ENCODE measurements at regions of chr9 and their contacts with region 1.

Region 1: GRCh38 chr9:95726756-95727155 is 148.7 kb upstream of the ERCC6L2 start:
- DNase-seq: no peak
- ATAC-seq: no peak
- H3K4me3 Mint-ChIP-seq: no peak overlapping the region
- H3K27ac Mint-ChIP-seq: no peak overlapping the region
- H3K4me1 Mint-ChIP-seq: peaks cover 37% of the 10 kb centered on the region
- H3K27me3 Mint-ChIP-seq: peaks cover 7% of the 10 kb centered on the region

Region 2: GRCh38 chr9:95462249-95463147 is 264.3 kb before region 1 on chr9:
- CTCF ChIA-PET with region 1: no interaction called
- POLR2A ChIA-PET with region 1: no interaction called
- intact Hi-C with region 1: loop called in 1 of 2 experiments (anchors 1 kb)
- DNase-seq: peak; percentile 89
- ATAC-seq: peak; percentile 94
- H3K4me3 Mint-ChIP-seq: peak overlapping the region; percentile 72
- H3K27ac Mint-ChIP-seq: peak overlapping the region; percentile 72
- H3K4me1 Mint-ChIP-seq: peaks cover 26% of the 10 kb centered on the region
- H3K27me3 Mint-ChIP-seq: peaks cover 4% of the 10 kb centered on the region

Region 3: GRCh38 chr9:95570150-95570549 is 156.6 kb before region 1 on chr9:
- CTCF ChIA-PET with region 1: no interaction called
- POLR2A ChIA-PET with region 1: no interaction called
- intact Hi-C with region 1: no loop called
- DNase-seq: no peak
- ATAC-seq: no peak
- H3K4me3 Mint-ChIP-seq: peak overlapping the region; percentile 20
- H3K27ac Mint-ChIP-seq: no peak overlapping the region
- H3K4me1 Mint-ChIP-seq: peaks cover 12% of the 10 kb centered on the region
- H3K27me3 Mint-ChIP-seq: peaks cover 30% of the 10 kb centered on the region

Region 4: DNA sequence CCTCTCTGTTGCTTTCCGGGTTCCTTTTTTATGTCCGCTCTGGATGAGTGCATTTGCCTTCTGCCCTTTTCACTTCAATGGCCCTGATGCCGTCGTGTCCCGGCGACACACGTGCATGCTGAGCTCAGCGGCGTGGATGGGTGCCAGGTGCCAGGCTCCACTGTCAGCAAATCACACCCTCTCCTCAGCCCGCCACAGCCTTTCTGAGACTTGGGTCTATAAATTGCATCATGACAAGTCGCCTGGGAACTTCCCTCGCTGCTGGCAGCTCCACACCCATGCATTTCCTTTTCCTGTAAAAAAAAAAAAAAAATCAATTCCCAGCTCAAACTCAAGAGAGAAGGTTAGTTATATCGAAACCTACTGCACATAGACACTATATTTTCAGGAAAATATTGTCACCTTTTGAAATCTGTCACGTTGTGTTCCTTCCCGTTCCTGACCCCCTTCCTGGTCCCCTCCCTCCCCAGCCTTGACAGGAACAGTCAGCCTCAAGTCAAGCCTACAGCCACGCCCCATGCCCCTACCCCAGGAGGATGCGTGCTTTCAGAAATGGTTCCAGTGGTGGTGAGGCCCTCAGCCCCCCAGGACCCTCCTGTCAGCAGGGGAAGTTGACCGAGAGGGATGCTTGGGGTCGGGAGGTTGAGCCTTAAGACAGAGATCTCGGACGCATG is 99.7 kb before region 1 on chr9:
- CTCF ChIA-PET with region 1: no interaction called
- POLR2A ChIA-PET with region 1: no interaction called
- intact Hi-C with region 1: loop called in 1 of 2 experiments (anchors 1 kb)
- DNase-seq: peak; percentile 86
- ATAC-seq: peak; percentile 98
- H3K4me3 Mint-ChIP-seq: no peak overlapping the region
- H3K27ac Mint-ChIP-seq: peak overlapping the region; percentile 91
- H3K4me1 Mint-ChIP-seq: peaks cover 19% of the 10 kb centered on the region
- H3K27me3 Mint-ChIP-seq: peaks cover 6% of the 10 kb centered on the region

Region 5: DNA sequence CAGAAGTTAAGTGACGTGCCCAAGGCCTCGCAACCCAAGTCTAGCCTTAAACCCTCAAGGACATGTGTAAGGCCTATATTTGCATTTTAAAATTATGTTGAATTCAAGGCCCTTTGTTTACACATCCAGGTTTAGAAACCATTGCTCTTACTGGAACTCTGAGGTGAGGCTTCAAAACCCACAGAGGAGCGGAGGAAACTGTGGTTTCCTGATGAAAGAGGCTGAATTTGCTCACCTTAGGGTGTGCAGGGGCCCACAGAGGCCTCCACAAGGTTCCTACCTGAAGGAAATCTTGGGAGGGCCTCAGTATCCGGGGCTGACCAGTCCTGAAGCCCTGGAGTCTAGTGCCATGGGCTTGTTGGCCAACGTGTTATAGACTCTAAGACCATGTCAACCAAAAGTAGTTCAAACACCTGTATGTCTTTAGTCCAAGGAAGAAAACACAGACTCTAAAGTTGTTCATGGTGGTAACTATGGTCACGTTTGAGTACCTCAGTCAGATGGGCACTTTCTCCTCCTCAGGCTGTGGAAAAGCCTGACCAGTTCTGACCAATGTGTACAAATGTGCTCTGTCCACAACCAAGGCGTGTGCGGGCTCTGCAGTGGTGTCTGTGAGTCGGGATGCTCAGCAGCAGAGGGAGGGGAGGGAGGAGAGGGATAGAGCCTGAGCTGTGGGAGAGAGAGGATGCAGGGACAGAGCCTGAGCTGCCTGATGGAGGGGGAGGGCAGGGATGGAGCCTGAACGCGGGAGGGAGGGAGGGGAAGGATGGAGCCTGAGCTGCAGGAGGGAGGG is 24.2 kb after region 1 on chr9:
- CTCF ChIA-PET with region 1: interaction called, 5 read pairs
- POLR2A ChIA-PET with region 1: no interaction called
- intact Hi-C with region 1: loop called in 1 of 2 experiments (anchors 1 kb)
- DNase-seq: peak; percentile 53
- ATAC-seq: peak; percentile 76
- H3K4me3 Mint-ChIP-seq: no peak overlapping the region
- H3K27ac Mint-ChIP-seq: peak overlapping the region; percentile 30
- H3K4me1 Mint-ChIP-seq: peaks cover 10% of the 10 kb centered on the region
- H3K27me3 Mint-ChIP-seq: peaks cover 12% of the 10 kb centered on the region

Region 6: GRCh38 chr9:95852059-95853032 is 125.6 kb after region 1 on chr9:
- CTCF ChIA-PET with region 1: no interaction called
- POLR2A ChIA-PET with region 1: no interaction called
- intact Hi-C with region 1: loop called in 1 of 2 experiments (anchors 2 kb)
- DNase-seq: peak; percentile 22
- ATAC-seq: peak; percentile 96
- H3K4me3 Mint-ChIP-seq: no peak overlapping the region
- H3K27ac Mint-ChIP-seq: peak overlapping the region; percentile 58
- H3K4me1 Mint-ChIP-seq: peaks cover 19% of the 10 kb centered on the region
- H3K27me3 Mint-ChIP-seq: no peaks in the 10 kb centered on the region

Region 7: GRCh38 chr9:95947118-95947517 is 220.4 kb after region 1 on chr9:
- CTCF ChIA-PET with region 1: no interaction called
- POLR2A ChIA-PET with region 1: no interaction called
- intact Hi-C with region 1: no loop called
- DNase-seq: no peak
- ATAC-seq: no peak
- H3K4me3 Mint-ChIP-seq: no peak overlapping the region
- H3K27ac Mint-ChIP-seq: no peak overlapping the region
- H3K4me1 Mint-ChIP-seq: no peaks in the 10 kb centered on the region
- H3K27me3 Mint-ChIP-seq: no peaks in the 10 kb centered on the region

Region 8: GRCh38 chr9:96020792-96021550 is 294.2 kb after region 1 on chr9:
- CTCF ChIA-PET with region 1: no interaction called
- POLR2A ChIA-PET with region 1: no interaction called
- intact Hi-C with region 1: loop called (anchors 1 to 2 kb)
- DNase-seq: peak; percentile 71
- ATAC-seq: peak; percentile 38
- H3K4me3 Mint-ChIP-seq: peak overlapping the region; percentile 68
- H3K27ac Mint-ChIP-seq: peak overlapping the region; percentile 63
- H3K4me1 Mint-ChIP-seq: peaks cover 57% of the 10 kb centered on the region
- H3K27me3 Mint-ChIP-seq: peaks cover 43% of the 10 kb centered on the region

Region 9: GRCh38 chr9:96486368-96487028 is 759.7 kb after region 1 on chr9:
- CTCF ChIA-PET with region 1: no interaction called
- POLR2A ChIA-PET with region 1: no interaction called
- intact Hi-C with region 1: loop called in 1 of 2 experiments (anchors 10 kb)
- DNase-seq: no peak
- ATAC-seq: no peak
- H3K4me3 Mint-ChIP-seq: no peak overlapping the region
- H3K27ac Mint-ChIP-seq: no peak overlapping the region
- H3K4me1 Mint-ChIP-seq: peaks cover 28% of the 10 kb centered on the region
- H3K27me3 Mint-ChIP-seq: no peaks in the 10 kb centered on the region

Measured in activated CD4-positive, alpha-beta T cell treated with anti-CD3 and anti-CD28 coated beads for 36 hours (primary cell).